Aorta (tissue), 5 donors: ENCODE measurements at regions of chr14 and their contacts with region 1.

Region 1: DNA sequence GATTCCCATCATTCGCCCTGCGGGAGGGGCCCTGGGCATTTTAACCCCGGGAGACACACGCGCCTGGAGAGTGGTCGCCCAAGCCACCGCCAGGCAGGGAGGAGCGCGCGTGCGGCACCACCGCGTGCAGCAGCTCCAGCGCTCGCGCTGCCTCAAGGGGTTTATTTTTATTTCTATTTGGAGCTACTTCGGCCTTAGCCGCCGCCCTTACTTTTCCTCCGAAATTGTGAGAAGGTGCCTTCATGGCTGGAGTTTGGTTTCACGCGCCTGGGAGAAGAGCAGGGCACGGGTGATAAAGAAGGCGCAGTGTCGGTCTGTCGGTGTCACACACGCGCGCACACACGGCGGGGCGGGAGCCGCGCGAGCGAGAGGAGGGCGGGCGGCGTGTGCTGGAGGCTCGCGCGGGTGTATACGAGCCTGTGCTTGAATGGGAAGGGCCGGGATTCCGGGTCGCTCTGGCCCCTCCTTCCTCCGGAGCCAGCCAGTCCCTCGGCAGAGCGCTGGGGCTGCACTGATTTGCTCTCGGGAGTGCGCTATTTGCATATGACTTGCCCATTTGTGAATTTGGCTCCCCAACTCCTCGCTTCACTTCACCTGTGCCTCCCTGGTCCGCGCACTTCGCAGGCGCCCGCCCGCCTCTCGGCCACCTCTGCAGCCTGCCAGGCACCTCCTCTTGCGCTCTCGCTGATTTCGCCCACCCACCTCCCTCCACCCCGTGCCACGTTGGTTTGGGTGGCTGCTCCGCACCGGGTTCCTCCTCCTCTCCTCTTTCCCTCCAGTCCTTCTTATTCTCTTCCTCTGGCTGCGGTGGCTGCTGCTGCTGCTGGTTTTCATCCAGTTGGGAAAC is 932.3 kb downstream of the DIO2 start:
- DNase-seq: peak; percentile 85 to 89
- ATAC-seq: peak; percentile 93
- H3K4me3 ChIP-seq: peak overlapping the region; percentile 32 to 62
- H3K27ac ChIP-seq: no peak overlapping the region
- H3K4me1 ChIP-seq: peaks cover 2% of the 10 kb centered on the region in 2 donors
- H3K27me3 ChIP-seq: no peaks in the 10 kb centered on the region

Region 2: DNA sequence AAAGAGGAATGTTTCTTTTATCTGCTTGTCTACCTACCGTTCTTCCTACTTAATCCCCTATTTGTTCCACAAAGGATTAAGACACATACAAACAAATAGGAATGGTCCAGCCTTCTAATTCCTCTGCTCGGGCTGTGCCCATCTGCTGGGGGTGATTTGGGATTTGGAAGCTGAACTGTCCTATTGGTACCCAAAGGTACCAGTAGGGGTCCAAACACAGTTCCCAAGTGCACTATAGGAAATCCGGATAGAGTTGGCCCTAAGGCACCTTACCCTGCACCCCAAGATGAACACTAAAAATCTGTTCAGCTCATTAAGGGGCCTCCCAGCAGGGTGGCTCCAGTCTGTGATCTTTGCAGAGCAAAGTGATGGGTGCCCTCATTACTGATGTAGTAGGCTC is 541.9 kb before region 1 on chr14:
- intact Hi-C with region 1: no loop called
- DNase-seq: no peak
- ATAC-seq: no peak
- H3K4me3 ChIP-seq: no peak overlapping the region
- H3K27ac ChIP-seq: no peak overlapping the region
- H3K4me1 ChIP-seq: no peaks in the 10 kb centered on the region
- H3K27me3 ChIP-seq: no peaks in the 10 kb centered on the region

Region 3: GRCh38 chr14:78959674-78960264 is 319.3 kb before region 1 on chr14:
- intact Hi-C with region 1: loop called in 1 of 2 experiments (anchors 10 kb)
- DNase-seq: peak; percentile 73 to 87
- ATAC-seq: peak; percentile 88
- H3K4me3 ChIP-seq: peak overlapping the region; percentile 49 to 51
- H3K27ac ChIP-seq: no peak overlapping the region
- H3K4me1 ChIP-seq: no peaks in the 10 kb centered on the region
- H3K27me3 ChIP-seq: no peaks in the 10 kb centered on the region

Region 4: GRCh38 chr14:79111987-79112418 is 167.0 kb before region 1 on chr14:
- intact Hi-C with region 1: loop called in 1 of 2 experiments (anchors 5 kb)
- DNase-seq: no peak
- ATAC-seq: no peak
- H3K4me3 ChIP-seq: no peak overlapping the region
- H3K27ac ChIP-seq: no peak overlapping the region
- H3K4me1 ChIP-seq: peaks cover 0 to 2% of the 10 kb centered on the region in 2 donors
- H3K27me3 ChIP-seq: no peaks in the 10 kb centered on the region